Dendritic cell treated with granulocyte-macrophage colony-stimulating factor and Interleukin-4, amounts not matched to agents 40 ng/mL and 50 ng/mL, for 4 days (primary cell): ENCODE measurements at regions of chr13 and their contacts with region 1.

Region 1: GRCh38 chr13:20127577-20128466 is 33.0 kb downstream of the GJA3 start:
- H3K4me3 Mint-ChIP-seq: peak overlapping the region; percentile 78
- H3K27ac Mint-ChIP-seq: peak overlapping the region; percentile 68
- H3K4me1 Mint-ChIP-seq: peaks cover 11% of the 10 kb centered on the region
- H3K27me3 Mint-ChIP-seq: peaks cover 19% of the 10 kb centered on the region

Region 2: DNA sequence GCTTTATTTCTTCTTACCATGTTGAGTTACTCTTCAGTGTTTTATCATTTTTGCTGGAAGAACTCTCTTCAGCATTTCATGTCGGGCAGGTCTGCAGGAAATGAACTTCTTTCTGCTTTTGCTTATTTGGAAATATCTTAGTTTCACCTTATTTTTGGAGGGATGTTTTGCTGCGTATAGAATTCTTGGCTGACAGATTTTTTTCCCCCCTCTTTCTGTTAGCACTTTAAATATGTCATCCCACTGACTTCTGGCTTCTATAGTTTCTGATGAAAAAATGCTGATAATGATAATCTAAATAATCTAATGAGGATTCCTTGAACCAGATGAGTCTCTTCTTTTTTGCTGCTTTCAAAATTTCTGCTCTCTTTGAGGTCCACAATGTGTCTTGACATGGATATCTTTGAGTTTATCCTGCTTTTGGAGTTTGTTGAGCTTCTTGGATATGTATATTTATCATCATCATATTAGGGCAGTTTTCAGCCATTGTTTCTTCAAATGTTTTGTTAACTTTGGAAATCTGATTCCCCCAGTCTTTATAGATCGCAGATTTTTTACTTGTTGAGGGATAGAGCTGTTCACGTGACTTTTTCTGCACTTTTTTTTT is 148.9 kb before region 1 on chr13:
- intact Hi-C with region 1: no loop called
- H3K4me3 Mint-ChIP-seq: no peak overlapping the region
- H3K27ac Mint-ChIP-seq: no peak overlapping the region
- H3K4me1 Mint-ChIP-seq: peaks cover 17% of the 10 kb centered on the region
- H3K27me3 Mint-ChIP-seq: no peaks in the 10 kb centered on the region

Region 3: DNA sequence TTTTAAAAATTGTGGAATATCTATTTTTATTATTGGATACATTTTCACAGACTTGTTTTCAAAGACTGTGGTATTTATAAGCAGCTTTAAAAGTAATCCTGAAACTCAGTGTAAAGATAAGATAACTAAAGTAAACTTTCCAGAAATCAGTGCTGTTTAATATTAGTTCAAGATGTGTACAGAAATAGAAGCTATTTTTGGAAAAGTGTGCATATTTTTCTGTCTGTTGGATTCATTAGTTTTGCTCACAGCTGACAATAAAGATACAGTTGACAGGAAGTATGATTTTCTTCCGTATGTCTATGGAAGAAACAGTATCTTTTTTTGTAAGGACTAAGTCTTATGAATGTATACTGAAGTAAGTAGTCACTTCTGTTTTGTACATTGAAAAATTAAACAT is 52.9 kb before region 1 on chr13:
- intact Hi-C with region 1: loop called (anchors 5 kb)
- H3K4me3 Mint-ChIP-seq: no peak overlapping the region
- H3K27ac Mint-ChIP-seq: peak overlapping the region; percentile 80
- H3K4me1 Mint-ChIP-seq: peaks cover 56% of the 10 kb centered on the region
- H3K27me3 Mint-ChIP-seq: no peaks in the 10 kb centered on the region

Region 4: GRCh38 chr13:20090349-20090748 is 37.5 kb before region 1 on chr13:
- intact Hi-C with region 1: loop called (anchors 5 kb)
- H3K4me3 Mint-ChIP-seq: no peak overlapping the region
- H3K27ac Mint-ChIP-seq: no peak overlapping the region
- H3K4me1 Mint-ChIP-seq: no peaks in the 10 kb centered on the region
- H3K27me3 Mint-ChIP-seq: peaks cover 2% of the 10 kb centered on the region

Region 5: DNA sequence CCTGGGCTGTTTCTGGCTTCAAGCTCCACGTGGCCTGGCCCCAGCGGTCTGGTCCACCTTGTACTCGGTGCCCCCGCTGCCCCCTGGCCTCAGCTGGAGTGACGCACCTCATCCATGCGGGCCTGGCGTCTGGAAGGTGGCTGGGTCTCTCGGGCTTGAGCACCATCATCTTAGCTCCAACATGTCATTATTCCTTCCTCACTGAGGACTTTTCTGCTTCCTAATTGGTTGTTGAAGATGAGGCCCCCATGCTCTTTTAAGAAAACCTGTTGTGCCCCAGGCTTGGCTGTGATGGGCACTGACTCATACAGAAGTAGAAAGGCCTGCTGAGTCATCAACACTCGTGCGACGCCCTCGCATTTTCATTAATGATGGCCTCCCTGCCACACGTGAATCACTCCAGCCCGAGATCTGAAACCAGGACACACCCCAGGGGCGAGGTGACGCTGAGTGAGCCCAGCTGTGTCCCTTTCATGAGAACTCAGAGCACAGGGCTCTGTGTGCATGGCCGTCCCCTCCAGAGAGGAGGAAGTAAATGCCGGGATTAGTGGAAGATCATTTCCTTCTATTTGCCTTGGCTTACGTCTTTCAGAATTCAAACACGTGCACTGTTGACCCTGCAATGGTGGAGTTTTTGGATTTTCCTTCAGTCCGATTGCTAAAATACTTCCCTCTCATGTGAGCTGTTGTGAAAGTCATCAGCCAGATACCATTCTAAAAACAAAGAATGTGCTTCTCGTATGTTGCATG is 47.0 kb after region 1 on chr13:
- intact Hi-C with region 1: no loop called
- H3K4me3 Mint-ChIP-seq: peak overlapping the region; percentile 60
- H3K27ac Mint-ChIP-seq: peak overlapping the region; percentile 73
- H3K4me1 Mint-ChIP-seq: peaks cover 61% of the 10 kb centered on the region
- H3K27me3 Mint-ChIP-seq: peaks cover 58% of the 10 kb centered on the region

Region 6: GRCh38 chr13:20197361-20197834 is 69.6 kb after region 1 on chr13:
- intact Hi-C with region 1: no loop called
- H3K4me3 Mint-ChIP-seq: no peak overlapping the region
- H3K27ac Mint-ChIP-seq: no peak overlapping the region
- H3K4me1 Mint-ChIP-seq: peaks cover 20% of the 10 kb centered on the region
- H3K27me3 Mint-ChIP-seq: peaks cover 37% of the 10 kb centered on the region